ENCODE measurements at regions of chr3 and their contacts with region 1.

Region 1: GRCh38 chr3:81658322-81658997 is 103.0 kb downstream of the GBE1 start:
- DNase-seq: no peak
- H3K4me3 ChIP-seq: no peak overlapping the region
- H3K27ac ChIP-seq: no peak overlapping the region
- H3K4me1 ChIP-seq: peaks cover 0 to under 1% (median 0%) of the 10 kb centered on the region in 4 donors
- H3K27me3 ChIP-seq: no peaks in the 10 kb centered on the region
- CTCF ChIP-seq: no peak

Region 2: DNA sequence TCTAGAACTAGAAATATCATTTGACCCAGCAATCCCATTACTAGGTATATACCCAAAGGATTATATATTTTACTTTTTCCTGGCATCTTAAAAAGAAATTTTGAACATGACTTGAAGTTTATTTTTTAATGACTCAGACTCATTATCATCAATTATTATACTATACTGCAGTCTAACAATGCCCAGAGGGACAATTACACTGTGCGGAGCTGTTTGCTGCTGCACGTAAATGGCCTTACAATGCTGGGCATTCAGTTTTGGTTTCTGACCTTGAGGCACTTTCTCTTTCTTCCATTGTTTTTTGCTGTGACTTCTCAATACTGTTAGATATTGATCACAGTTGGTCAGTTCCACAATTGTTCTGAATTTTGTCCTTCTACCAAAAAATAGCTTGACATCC is 25.8 kb before region 1 on chr3:
- intact Hi-C with region 1: loop called (anchors 2 kb)
- DNase-seq: no peak
- H3K4me3 ChIP-seq: no peak overlapping the region
- H3K27ac ChIP-seq: no peak overlapping the region
- H3K4me1 ChIP-seq: no peaks in the 10 kb centered on the region
- H3K27me3 ChIP-seq: no peaks in the 10 kb centered on the region
- CTCF ChIP-seq: no peak

Region 3: GRCh38 chr3:82676356-82677026 is 1018.0 kb after region 1 on chr3:
- intact Hi-C with region 1: no loop called
- DNase-seq: no peak
- H3K4me3 ChIP-seq: no peak overlapping the region
- H3K27ac ChIP-seq: no peak overlapping the region
- H3K4me1 ChIP-seq: no peaks in the 10 kb centered on the region
- H3K27me3 ChIP-seq: no peaks in the 10 kb centered on the region
- CTCF ChIP-seq: no peak

Region 4: DNA sequence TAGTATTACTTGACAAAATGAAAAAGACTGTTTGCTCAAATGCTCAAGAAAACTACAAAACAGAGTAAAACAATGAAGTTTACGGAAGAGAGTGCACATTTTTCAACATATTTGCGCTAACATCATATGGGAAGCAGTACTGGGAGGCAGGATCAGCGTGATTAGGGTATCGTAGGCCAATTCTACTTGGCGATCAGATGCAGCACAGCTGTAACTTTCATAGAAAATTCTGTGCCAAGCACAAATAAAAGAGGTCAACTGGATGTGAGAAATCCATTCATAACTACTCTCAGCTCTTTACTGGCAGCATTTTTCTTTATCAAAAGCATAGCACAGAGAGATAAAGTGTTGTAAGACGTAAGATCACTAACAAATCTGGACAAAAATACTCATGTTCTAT is 1299.2 kb after region 1 on chr3:
- intact Hi-C with region 1: no loop called
- DNase-seq: no peak
- H3K4me3 ChIP-seq: no peak overlapping the region
- H3K27ac ChIP-seq: no peak overlapping the region
- H3K4me1 ChIP-seq: no peaks in the 10 kb centered on the region
- H3K27me3 ChIP-seq: no peaks in the 10 kb centered on the region
- CTCF ChIP-seq: no peak

Measured in tibial artery (tissue), 4 donors.